ENCODE measurements at regions of chr21 and their contacts with region 1.

Region 1: GRCh38 chr21:43874085-43874785 is 9.2 kb downstream of the AGPAT3 start:
- DNase-seq: no peak
- ATAC-seq: no peak
- H3K4me3 ChIP-seq: no peak overlapping the region
- H3K27ac ChIP-seq: no peak overlapping the region
- H3K4me1 ChIP-seq: peaks cover 5 to 24% of the 10 kb centered on the region in 2 experiments; a peak in 4 of 5 replicates
- H3K27me3 ChIP-seq: no peaks in the 10 kb centered on the region
- CTCF ChIP-seq: no peak
- EP300 ChIP-seq: no peak
- POLR2A ChIP-seq: no peak
- RAD21 ChIP-seq: no peak

Region 2: DNA sequence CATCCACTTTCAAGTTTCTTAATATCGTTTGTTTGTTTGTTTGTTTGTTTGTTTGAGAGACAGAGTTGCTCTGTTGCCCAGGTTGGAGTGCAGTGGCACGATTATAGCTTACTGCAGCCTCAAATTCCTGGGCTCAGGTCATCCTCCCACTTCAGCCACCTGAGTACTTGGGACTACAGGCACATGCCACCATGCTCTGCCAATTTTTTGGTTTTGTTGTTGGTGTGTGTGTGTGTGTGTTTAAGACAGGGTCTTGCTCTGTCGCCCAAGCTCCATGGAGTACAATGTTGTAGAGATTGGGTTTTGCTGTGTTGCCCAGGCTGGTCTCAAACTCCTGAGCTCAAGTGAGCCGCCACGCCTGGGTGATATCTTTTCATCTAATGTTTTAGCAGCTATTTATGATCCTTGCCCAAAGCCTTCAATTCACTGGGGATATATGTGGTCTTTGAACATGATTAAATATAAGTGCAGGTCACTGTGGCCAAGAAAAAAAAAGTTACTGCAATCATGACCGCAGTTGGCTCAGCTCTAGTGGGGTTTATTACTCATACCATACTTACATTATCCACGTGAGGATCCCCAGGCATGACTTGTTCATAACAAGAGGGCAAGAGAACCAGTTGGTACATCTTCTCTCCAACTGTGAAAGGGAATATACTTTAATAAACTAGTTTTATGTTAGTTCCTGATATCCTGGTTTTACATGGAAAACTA is 206.9 kb before region 1 on chr21:
- CTCF ChIA-PET with region 1: no interaction called
- POLR2A ChIA-PET with region 1: no interaction called
- in situ Hi-C with region 1: no loop called
- intact Hi-C with region 1: no loop called
- DNase-seq: no peak
- ATAC-seq: no peak
- H3K4me3 ChIP-seq: no peak overlapping the region
- H3K27ac ChIP-seq: no peak overlapping the region
- H3K4me1 ChIP-seq: no peaks in the 10 kb centered on the region
- H3K27me3 ChIP-seq: no peaks in the 10 kb centered on the region
- CTCF ChIP-seq: no peak
- EP300 ChIP-seq: no peak
- POLR2A ChIP-seq: no peak
- RAD21 ChIP-seq: no peak

Region 3: DNA sequence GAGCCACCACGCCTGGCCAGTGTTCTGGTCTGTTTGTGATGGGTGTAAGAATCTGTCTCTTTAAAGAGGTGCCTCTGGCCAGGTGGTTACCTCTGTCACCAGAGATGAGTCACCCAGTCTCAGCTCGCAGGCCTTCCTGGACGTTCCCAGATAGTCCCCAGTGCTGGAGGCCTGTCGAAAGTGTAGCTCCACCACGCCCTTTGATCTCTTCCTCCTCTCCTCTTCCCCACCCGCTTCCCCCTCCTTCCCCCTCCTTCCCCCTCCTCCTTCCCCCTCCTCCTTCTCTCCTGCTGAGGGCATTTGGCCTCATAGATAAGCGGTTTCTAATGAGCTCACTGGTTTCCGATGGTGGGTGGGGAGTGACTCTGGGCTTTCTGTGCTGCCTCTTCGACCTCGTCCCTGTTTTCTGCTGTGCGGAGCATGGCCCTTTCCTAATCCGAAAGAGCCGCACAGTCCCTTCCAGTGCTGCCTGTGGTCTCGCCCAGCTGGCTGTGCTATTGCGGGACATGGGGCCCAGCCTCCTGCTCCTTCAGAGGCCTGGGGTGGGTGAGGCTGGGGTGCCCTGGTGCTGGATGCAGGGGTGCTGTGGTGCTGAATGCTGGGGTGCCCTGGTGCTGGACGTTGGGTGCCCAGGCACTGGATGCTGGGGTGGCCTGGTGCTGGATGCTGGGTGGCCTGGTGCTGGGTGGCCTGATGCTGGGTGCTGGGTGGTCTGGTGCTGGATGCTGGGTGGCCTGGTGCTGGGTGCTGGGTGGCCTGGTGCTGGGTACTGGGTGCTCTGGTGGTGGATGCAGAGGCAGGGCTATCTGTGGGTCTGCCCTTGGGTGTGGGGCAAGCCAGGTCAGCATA is 10.0 kb after region 1 on chr21:
- CTCF ChIA-PET with region 1: interaction called, 3 read pairs
- POLR2A ChIA-PET with region 1: interaction called, 20 read pairs
- in situ Hi-C with region 1: no loop called
- intact Hi-C with region 1: no loop called
- DNase-seq: peak; percentile 95 to 98 (median 96)
- ATAC-seq: peak; percentile 93
- H3K4me3 ChIP-seq: peak overlapping the region; percentile 35
- H3K27ac ChIP-seq: peak overlapping the region; percentile 98
- H3K4me1 ChIP-seq: peaks cover 40 to 60% of the 10 kb centered on the region in 2 experiments
- H3K27me3 ChIP-seq: no peaks in the 10 kb centered on the region
- CTCF ChIP-seq: no peak
- EP300 ChIP-seq: peak; percentile 91; the same call in 1 of the 2 replicates
- POLR2A ChIP-seq: peak; percentile 79
- RAD21 ChIP-seq: peak in 1 of 2 experiments; percentile 26; a peak in 1 of 4 replicates

Region 4: DNA sequence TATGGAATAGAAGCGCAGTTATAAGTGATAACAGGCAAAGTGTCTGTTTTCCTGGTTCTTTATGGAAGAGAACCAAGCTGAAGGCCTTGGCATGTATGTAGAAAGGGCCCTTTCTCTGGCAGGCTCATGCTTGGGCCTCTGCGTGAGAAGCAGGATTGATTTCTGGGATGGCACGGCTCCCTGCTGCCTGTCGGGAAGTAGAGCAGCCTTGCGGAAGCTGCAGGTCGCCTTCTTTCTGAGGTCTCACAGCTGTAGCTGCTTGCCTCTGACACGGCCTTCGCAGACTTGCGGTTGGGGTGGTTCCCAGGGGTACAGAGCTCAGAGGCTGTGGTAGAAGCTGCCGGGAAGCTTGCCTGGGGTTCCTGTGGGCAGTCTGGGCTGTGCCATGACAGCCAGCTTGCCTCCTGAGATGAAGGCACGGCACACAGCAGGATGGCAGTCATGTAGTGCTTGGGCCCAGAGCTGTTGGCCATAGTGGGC is 177.3 kb after region 1 on chr21:
- CTCF ChIA-PET with region 1: no interaction called
- POLR2A ChIA-PET with region 1: no interaction called
- in situ Hi-C with region 1: no loop called
- intact Hi-C with region 1: no loop called
- DNase-seq: no peak
- ATAC-seq: no peak
- H3K4me3 ChIP-seq: no peak overlapping the region
- H3K27ac ChIP-seq: no peak overlapping the region
- H3K4me1 ChIP-seq: 0 out of 5 replicates have a peak, but pooled peaks cover 0 to 5% of the 10 kb centered on the region in 2 experiments
- H3K27me3 ChIP-seq: no peaks in the 10 kb centered on the region
- CTCF ChIP-seq: no peak
- EP300 ChIP-seq: no peak
- POLR2A ChIP-seq: no peak
- RAD21 ChIP-seq: no peak

Measured in K562 (cell line).